A549 (cell line): ENCODE measurements at regions of chr3 and their contacts with region 1.

Region 1: GRCh38 chr3:40524568-40525285 is at the start of gene ZNF621:
- DNase-seq: peak; percentile 67 to 87
- ATAC-seq: peak; percentile 98 to 100
- H3K4me3 ChIP-seq: peak within 1 kb of the TSS; percentile 89
- H3K27ac ChIP-seq: peak within 1 kb of the TSS; percentile 89 to 95
- H3K4me1 ChIP-seq: no peaks in the 10 kb centered on the region
- CTCF ChIP-seq: no peak
- EP300 ChIP-seq: no peak
- POLR2A ChIP-seq: peak; percentile 92
- RAD21 ChIP-seq: no peak
- polyA plus RNA-seq, gene ZNF621: 14.8 and 16.1 TPM in 2 replicates

Region 2: GRCh38 chr3:40505599-40506462 is 18.9 kb before region 1 on chr3 and contains the start of gene ZNF620:
- CTCF ChIA-PET with region 1: no interaction called
- POLR2A ChIA-PET with region 1: interaction called, 11 read pairs
- DNase-seq: peak; percentile 62 to 86
- ATAC-seq: peak; percentile 95
- H3K4me3 ChIP-seq: peak within 1 kb of the TSS; percentile 63
- H3K27ac ChIP-seq: peak within 1 kb of the TSS; percentile 63 to 91
- H3K4me1 ChIP-seq: peaks cover 13% of the 10 kb centered on the region; the same call in 2 of the 3 replicates
- CTCF ChIP-seq: no peak
- EP300 ChIP-seq: no peak
- POLR2A ChIP-seq: peak; percentile 32; the same call in 1 of the 2 replicates
- RAD21 ChIP-seq: no peak
- polyA plus RNA-seq, gene ZNF620: 3.2 and 3.8 TPM in 2 replicates